Dorsolateral prefrontal cortex (tissue), 120 donors: ENCODE measurements at regions of chr6 and their contacts with region 1.

Region 1: DNA sequence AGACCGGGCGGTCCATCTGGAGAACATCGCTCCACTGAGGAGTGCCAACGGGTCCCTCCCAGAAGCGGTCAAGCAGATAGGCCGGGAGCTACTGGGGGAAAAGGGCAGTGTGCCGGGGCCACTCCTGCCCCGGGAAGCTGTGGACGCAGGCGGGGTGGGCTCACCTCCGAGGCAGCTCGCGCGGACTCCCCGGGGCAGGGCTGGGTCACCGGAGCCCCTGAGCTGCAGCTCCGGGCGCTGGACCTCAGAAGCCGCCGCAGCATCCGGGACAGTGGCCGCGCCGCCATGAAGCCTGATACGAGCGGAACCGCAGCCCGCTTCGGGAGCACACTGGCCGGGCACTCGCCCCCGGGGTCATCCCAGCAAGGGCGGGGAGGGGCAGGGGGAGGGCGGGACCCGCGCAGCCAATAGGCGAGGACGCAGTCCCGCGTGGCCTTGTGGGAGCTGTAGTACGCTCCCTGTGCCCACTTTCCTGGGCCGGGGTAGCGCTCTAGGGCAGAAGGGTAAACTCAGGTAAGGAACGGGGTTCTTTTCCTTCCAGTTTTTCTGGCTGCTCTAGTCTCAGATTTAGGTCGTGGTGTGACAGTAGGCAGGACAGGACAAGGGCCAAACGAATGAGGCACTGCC is at the start of gene MOCS1:
- DNase-seq: peak; percentile 82 to 92 (median 88)
- H3K4me3 ChIP-seq: peak within 1 kb of the TSS; percentile 58 to 100 (median 91)
- H3K27ac ChIP-seq: peak within 1 kb of the TSS; percentile 47 to 97 (median 89)
- H3K27me3 ChIP-seq: no peaks in the 10 kb centered on the region
- CTCF ChIP-seq: peak in 29 of 56 donors; percentile 7 to 56 (median 27)
- total RNA-seq, gene MOCS1: 17.5 to 42.3 (median 25.3) TPM

Region 2: GRCh38 chr6:38522322-38522721 is 1411.9 kb before region 1 on chr6:
- intact Hi-C with region 1: no loop called
- DNase-seq: no peak
- H3K4me3 ChIP-seq: peak overlapping the region in 1 of 59 donors; percentile 8
- H3K27ac ChIP-seq: peak overlapping the region in 37 of 59 donors; percentile 2 to 79 (median 48)
- H3K27me3 ChIP-seq: no peaks in the 10 kb centered on the region
- CTCF ChIP-seq: no peak

Region 3: GRCh38 chr6:39897698-39898097 is 36.5 kb before region 1 on chr6:
- intact Hi-C with region 1: loop called in 1 of 2 experiments (anchors 5 kb)
- DNase-seq: no peak
- H3K4me3 ChIP-seq: no peak overlapping the region
- H3K27ac ChIP-seq: peak overlapping the region in 35 of 59 donors; percentile 3 to 76 (median 49)
- H3K27me3 ChIP-seq: no peaks in the 10 kb centered on the region
- CTCF ChIP-seq: no peak